ENCODE measurements at regions of chr2 and their contacts with region 1.

Region 1: GRCh38 chr2:163191372-163191771 is 352.8 kb upstream of the KCNH7 start:
- DNase-seq: peak; percentile 64
- H3K4me3 ChIP-seq: no peak overlapping the region
- H3K27ac ChIP-seq: no peak overlapping the region
- H3K4me1 ChIP-seq: peaks cover 19% of the 10 kb centered on the region
- H3K27me3 ChIP-seq: no peaks in the 10 kb centered on the region
- CTCF ChIP-seq: peak; percentile 45 to 47
- POLR2A ChIP-seq: no peak

Region 2: DNA sequence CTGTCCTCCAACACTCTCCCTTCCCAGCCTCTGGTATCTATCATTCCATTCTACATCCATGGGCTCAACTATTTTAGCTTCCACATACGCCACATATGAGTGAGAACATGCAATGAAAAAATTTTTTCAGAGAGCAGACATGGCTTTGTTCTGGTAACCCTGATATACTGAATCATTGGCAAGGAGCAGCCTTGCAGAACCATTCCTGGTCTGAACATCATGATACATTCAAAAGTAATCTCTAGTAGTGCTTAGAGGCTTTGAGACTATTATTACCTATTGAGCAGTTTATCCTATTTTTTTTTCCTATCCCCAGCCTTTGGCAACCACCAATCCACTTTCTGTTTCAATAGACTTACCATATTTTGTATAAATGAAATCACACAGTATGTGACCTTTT is 40.3 kb after region 1 on chr2:
- CTCF ChIA-PET with region 1: no interaction called
- POLR2A ChIA-PET with region 1: no interaction called
- dilution Hi-C with region 1: no loop called
- intact Hi-C with region 1: no loop called
- DNase-seq: no peak
- H3K4me3 ChIP-seq: no peak overlapping the region
- H3K27ac ChIP-seq: no peak overlapping the region
- H3K4me1 ChIP-seq: no peaks in the 10 kb centered on the region
- H3K27me3 ChIP-seq: no peaks in the 10 kb centered on the region
- CTCF ChIP-seq: no peak
- POLR2A ChIP-seq: no peak

Region 3: GRCh38 chr2:163471947-163472346 is 280.6 kb after region 1 on chr2:
- CTCF ChIA-PET with region 1: interaction called, 6 read pairs
- POLR2A ChIA-PET with region 1: no interaction called
- dilution Hi-C with region 1: no loop called
- intact Hi-C with region 1: loop called (anchors 5 kb)
- DNase-seq: peak; percentile 18
- H3K4me3 ChIP-seq: no peak overlapping the region
- H3K27ac ChIP-seq: no peak overlapping the region
- H3K4me1 ChIP-seq: no peaks in the 10 kb centered on the region
- H3K27me3 ChIP-seq: peaks cover 2 to 3% of the 10 kb centered on the region in 2 experiments
- CTCF ChIP-seq: peak in 1 of 2 donors; percentile 22
- POLR2A ChIP-seq: no peak

Region 4: DNA sequence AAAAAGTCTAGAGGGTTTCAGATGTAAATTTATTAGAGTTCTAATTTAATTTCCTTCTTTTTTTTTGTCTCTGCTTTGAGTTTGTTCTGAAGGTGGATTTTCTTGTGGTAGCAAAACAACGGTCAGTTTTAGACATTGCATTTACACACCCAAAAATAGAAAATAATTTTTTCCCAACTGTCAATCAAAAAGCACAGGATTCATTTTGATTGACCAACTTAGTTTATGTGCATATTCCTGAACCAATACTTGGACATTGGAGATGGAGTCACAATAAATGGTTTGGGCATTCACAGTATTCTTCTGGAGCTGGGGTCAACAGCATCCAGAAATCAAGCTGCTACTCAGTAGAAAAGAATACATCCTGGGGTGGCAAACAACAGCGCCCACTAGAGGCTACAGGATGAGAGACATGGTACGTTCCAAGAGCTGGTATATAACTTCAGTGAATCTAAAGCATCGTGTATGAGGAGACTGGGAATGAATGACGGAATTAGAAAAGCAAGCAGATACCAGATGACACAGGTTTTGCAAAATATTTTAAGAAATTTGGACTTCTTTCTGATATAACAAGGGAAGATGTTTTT is 687.3 kb after region 1 on chr2:
- CTCF ChIA-PET with region 1: interaction called, 11 read pairs
- POLR2A ChIA-PET with region 1: no interaction called
- dilution Hi-C with region 1: no loop called
- intact Hi-C with region 1: loop called (anchors 5 kb)
- DNase-seq: peak; percentile 28
- H3K4me3 ChIP-seq: no peak overlapping the region
- H3K27ac ChIP-seq: no peak overlapping the region
- H3K4me1 ChIP-seq: no peaks in the 10 kb centered on the region
- H3K27me3 ChIP-seq: no peaks in the 10 kb centered on the region
- CTCF ChIP-seq: peak; percentile 52 to 61
- POLR2A ChIP-seq: no peak

Region 5: DNA sequence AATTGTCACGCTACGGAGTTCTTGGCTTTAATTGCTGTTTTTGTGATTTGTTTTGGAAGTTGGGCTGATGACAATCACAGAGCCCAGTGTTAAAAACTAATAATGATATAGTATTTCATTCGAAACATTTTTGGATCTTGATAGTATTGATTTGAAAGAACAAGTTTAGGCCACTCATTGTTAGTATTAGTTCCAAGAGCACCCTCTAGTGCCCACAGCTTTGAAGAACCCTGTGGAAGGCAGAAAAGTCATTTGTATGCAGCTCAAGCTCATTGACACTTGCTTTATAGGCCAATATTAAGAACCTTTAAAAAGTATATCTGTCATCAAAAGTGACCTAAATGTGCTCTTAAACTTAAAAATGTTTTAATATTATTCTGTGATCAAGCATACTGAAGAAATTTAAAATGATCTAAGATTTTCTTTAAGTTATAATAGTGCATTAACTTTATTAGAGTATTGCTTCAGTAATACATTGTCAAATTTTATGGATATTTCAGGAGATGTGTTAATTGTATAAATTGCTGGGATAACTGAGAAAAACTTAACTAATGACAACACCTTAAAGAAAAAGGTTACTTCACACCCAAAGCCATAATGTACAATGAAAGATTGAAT is 1238.9 kb after region 1 on chr2:
- CTCF ChIA-PET with region 1: interaction called, 40 read pairs
- POLR2A ChIA-PET with region 1: no interaction called
- dilution Hi-C with region 1: no loop called
- intact Hi-C with region 1: no loop called
- DNase-seq: peak; percentile 60
- H3K4me3 ChIP-seq: no peak overlapping the region
- H3K27ac ChIP-seq: no peak overlapping the region
- H3K4me1 ChIP-seq: no peaks in the 10 kb centered on the region
- H3K27me3 ChIP-seq: no peaks in the 10 kb centered on the region
- CTCF ChIP-seq: peak; percentile 48 to 57
- POLR2A ChIP-seq: no peak

Region 6: GRCh38 chr2:164538240-164538866 is 1347.0 kb after region 1 on chr2:
- CTCF ChIA-PET with region 1: interaction called, 10 read pairs
- POLR2A ChIA-PET with region 1: no interaction called
- dilution Hi-C with region 1: no loop called
- intact Hi-C with region 1: no loop called
- DNase-seq: peak; percentile 56
- H3K4me3 ChIP-seq: no peak overlapping the region
- H3K27ac ChIP-seq: no peak overlapping the region
- H3K4me1 ChIP-seq: peaks cover 5% of the 10 kb centered on the region
- H3K27me3 ChIP-seq: no peaks in the 10 kb centered on the region
- CTCF ChIP-seq: peak; percentile 58 to 68
- POLR2A ChIP-seq: no peak

Measured in endothelial cell of umbilical vein (primary cell).